ENCODE measurements at regions of chr6 and their contacts with region 1.

Region 1: GRCh38 chr6:20056350-20056992 is 155.8 kb downstream of the MBOAT1 start:
- DNase-seq: peak in 1 of 2 experiments; percentile 8
- H3K4me3 ChIP-seq: no peak overlapping the region
- H3K27ac ChIP-seq: no peak overlapping the region
- H3K4me1 ChIP-seq: no peaks in the 10 kb centered on the region
- H3K27me3 ChIP-seq: no peaks in the 10 kb centered on the region
- CTCF ChIP-seq: peak; percentile 76

Region 2: GRCh38 chr6:18527836-18528743 is 1528.4 kb before region 1 on chr6:
- CTCF ChIA-PET with region 1: no interaction called
- POLR2A ChIA-PET with region 1: no interaction called
- intact Hi-C with region 1: loop called (anchors 5 kb)
- DNase-seq: no peak
- H3K4me3 ChIP-seq: no peak overlapping the region
- H3K27ac ChIP-seq: no peak overlapping the region
- H3K4me1 ChIP-seq: no peaks in the 10 kb centered on the region
- H3K27me3 ChIP-seq: no peaks in the 10 kb centered on the region
- CTCF ChIP-seq: peak; percentile 66

Region 3: DNA sequence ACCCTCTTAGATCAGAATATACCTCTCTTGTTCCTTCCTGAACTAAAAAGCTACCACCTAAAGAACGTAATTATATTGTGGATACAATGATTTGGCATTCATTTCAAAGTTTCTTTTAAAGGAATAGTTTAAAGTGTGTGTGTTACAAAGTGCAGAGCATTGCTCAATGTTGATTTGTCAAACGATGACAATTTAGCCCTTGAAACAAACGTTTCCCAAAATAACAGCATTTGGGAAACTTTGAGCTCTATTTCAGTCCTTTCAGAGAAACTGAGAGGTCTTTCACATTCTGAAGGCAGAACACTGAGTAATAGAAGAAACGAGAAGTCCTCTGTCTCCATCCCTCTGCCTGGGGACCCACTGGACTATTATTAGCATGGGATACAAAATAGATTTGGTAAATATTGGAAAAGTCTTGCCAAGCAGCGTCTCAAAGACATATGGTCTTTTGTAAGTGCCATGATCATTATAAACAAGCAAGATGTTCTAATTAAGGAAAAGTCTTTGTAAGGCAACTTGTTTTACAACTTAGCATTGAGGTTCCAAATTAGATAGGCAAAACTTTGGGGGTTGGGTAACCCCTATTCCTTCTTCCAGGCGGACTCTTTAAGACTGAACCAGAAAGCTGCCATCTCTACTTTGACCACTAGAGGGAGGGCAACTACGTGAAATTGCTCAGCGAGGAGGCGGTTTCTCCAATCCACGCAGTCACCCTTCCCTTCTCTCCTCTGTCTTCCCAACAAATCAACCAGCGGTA is 1460.5 kb before region 1 on chr6:
- CTCF ChIA-PET with region 1: no interaction called
- POLR2A ChIA-PET with region 1: no interaction called
- intact Hi-C with region 1: loop called (anchors 1 kb)
- DNase-seq: peak in 1 of 2 experiments; percentile 54
- H3K4me3 ChIP-seq: no peak overlapping the region
- H3K27ac ChIP-seq: no peak overlapping the region
- H3K4me1 ChIP-seq: no peaks in the 10 kb centered on the region
- H3K27me3 ChIP-seq: no peaks in the 10 kb centered on the region
- CTCF ChIP-seq: peak; percentile 95

Region 4: DNA sequence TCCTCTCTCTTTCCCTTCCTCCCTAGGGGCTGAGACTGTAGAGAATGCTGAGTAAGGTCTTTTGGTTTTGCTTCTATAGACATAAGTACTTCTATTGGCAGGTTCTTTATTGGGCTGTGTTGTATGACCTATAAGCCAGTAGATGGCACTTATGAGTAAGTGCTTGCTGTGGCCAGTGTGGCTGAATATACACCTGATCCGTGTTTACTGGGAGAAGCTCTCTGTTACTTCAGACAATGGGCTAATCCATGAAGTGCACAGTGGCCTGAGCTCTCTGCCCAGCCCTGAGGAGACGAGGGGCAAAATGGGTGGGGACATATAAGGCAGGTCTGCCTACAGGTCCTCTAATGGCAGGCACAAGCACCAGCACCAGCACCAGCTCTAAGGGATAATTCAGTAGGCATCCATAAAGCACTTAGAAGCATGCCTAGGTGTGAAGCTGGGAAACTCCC is 1059.1 kb before region 1 on chr6:
- CTCF ChIA-PET with region 1: no interaction called
- POLR2A ChIA-PET with region 1: no interaction called
- intact Hi-C with region 1: loop called (anchors 1 kb)
- DNase-seq: peak; percentile 17 to 58
- H3K4me3 ChIP-seq: no peak overlapping the region
- H3K27ac ChIP-seq: no peak overlapping the region
- H3K4me1 ChIP-seq: no peaks in the 10 kb centered on the region
- H3K27me3 ChIP-seq: no peaks in the 10 kb centered on the region
- CTCF ChIP-seq: peak; percentile 77

Region 5: DNA sequence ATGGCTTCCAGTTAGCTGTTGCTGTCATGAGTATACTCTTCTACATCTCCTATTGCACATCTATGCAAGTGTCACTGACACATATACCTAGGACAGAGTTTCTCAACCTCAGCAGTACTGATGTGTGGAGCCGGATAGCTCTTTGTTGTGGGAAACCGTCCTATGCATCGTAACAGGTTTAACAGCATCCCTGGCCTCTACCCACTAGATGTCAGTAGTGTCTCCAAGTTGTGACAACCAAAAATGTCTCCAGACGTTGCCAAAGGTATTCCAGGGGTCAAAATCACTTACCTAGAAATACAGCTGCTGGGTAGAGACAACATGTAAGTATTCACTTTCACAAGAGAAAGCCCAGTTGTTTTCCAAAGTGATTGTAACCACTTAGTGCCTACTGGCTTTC is 1031.7 kb before region 1 on chr6:
- CTCF ChIA-PET with region 1: interaction called, 6 read pairs
- POLR2A ChIA-PET with region 1: no interaction called
- intact Hi-C with region 1: loop called (anchors 1 kb)
- DNase-seq: peak; percentile 43
- H3K4me3 ChIP-seq: no peak overlapping the region
- H3K27ac ChIP-seq: no peak overlapping the region
- H3K4me1 ChIP-seq: no peaks in the 10 kb centered on the region
- H3K27me3 ChIP-seq: no peaks in the 10 kb centered on the region
- CTCF ChIP-seq: peak; percentile 67

Region 6: DNA sequence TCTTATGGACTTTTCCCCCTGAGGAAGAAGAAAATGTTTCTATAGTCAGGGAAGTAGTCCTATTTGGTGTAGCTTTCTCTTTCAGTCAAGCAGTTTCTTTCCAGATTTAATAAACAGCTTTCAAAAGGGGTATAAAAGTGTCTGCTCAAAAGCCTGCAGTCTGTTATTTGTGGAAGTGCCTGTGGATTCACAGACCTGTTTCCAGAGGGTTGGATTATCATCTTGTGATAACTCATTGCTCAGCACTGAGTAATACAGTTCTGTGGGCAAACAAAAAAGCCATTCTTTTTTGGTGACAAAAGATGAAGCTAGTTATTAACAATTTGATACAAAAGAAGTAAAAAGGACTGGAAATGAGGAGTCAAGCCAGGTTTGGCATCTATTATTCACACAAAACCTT is 577.5 kb before region 1 on chr6:
- CTCF ChIA-PET with region 1: no interaction called
- POLR2A ChIA-PET with region 1: no interaction called
- intact Hi-C with region 1: loop called (anchors 5 kb)
- DNase-seq: peak in 1 of 2 experiments; percentile 44
- H3K4me3 ChIP-seq: no peak overlapping the region
- H3K27ac ChIP-seq: no peak overlapping the region
- H3K4me1 ChIP-seq: peaks cover 32% of the 10 kb centered on the region
- H3K27me3 ChIP-seq: no peaks in the 10 kb centered on the region
- CTCF ChIP-seq: no peak

Measured in PC-9 (cell line).